ENCODE measurements at regions of chr17 and their contacts with region 1.

Region 1: GRCh38 chr17:74748529-74749365 is at the start of gene NHERF1:
- DNase-seq: peak; percentile 96
- H3K4me3 Mint-ChIP-seq: peak within 1 kb of the TSS; percentile 84
- H3K27ac Mint-ChIP-seq: peak within 1 kb of the TSS; percentile 85
- H3K4me1 Mint-ChIP-seq: peaks cover 52% of the 10 kb centered on the region
- H3K27me3 Mint-ChIP-seq: no peaks in the 10 kb centered on the region
- total RNA-seq, gene NHERF1: 136 TPM

Region 2: DNA sequence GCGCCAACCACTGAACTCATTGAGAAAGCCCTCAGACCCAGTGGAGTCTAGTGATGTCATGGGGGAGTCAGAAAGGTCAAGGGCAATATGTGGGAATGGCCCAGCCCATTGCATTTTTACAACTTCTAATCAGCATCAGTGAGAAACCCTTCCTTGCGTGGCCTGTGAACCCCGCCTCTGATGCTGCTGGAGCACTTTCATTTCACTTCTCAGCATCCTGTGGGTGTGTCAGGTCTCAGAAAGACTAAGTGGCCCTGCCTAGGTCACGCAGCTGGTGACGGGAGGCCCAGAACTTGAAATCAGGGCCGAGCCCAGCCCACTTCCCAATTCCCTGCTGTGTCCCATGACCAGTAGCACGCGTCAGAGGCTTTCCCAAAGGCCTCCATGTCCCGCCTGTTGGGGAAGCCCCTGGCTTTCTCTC is 468.6 kb before region 1 on chr17:
- CTCF ChIA-PET with region 1: no interaction called
- POLR2A ChIA-PET with region 1: no interaction called
- intact Hi-C with region 1: loop called (anchors 5 kb)
- DNase-seq: peak; percentile 86
- H3K4me3 Mint-ChIP-seq: peak overlapping the region; percentile 12
- H3K27ac Mint-ChIP-seq: peak overlapping the region; percentile 90
- H3K4me1 Mint-ChIP-seq: peaks cover 69% of the 10 kb centered on the region
- H3K27me3 Mint-ChIP-seq: no peaks in the 10 kb centered on the region

Region 3: DNA sequence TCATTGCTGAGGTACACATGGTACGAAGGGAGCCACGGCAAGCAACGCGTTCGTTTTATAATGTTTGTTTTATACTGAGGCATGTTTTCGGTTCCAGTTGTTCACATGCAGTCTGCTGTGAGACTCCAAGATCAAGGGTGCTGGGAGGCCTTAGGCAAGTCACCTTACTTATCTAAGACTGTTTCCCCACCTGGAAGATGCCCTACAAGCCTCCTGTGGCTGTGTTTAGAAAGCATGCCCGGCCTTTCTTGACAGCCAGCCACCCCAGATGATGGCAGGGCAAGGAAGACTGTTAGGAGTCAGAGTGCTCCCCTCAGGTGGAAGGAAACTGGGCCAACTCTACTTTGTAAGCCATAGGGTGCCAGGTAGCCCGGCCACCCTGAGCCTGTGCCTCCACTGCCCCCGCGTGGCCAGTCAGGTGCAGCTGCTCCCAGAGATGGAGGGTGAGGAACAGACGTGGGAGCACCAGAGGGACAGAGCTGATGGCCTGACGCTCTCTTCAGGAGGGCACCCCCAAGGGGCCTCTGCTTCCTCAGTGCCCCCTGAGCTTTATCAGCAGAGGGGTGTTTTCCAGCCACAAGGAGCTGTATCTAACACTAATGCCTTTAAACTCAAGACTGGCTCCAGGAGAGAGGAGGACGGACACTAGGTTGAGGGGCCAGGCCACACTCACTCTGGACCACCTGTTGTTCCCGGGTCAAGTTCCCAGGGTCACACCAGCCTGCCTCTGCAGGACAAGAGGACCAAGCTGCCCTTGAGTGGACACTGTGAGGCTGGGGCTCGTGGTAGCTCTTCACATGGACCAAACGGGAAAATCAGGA is 22.0 kb after region 1 on chr17:
- CTCF ChIA-PET with region 1: interaction called, 176 read pairs
- POLR2A ChIA-PET with region 1: interaction called, 24 read pairs
- intact Hi-C with region 1: loop called (anchors 1 kb)
- DNase-seq: peak; percentile 83
- H3K4me3 Mint-ChIP-seq: no peak overlapping the region
- H3K27ac Mint-ChIP-seq: peak overlapping the region; percentile 71
- H3K4me1 Mint-ChIP-seq: peaks cover 40% of the 10 kb centered on the region
- H3K27me3 Mint-ChIP-seq: no peaks in the 10 kb centered on the region

Region 4: GRCh38 chr17:74785096-74785980 is 36.6 kb after region 1 on chr17:
- CTCF ChIA-PET with region 1: interaction called, 52 read pairs
- POLR2A ChIA-PET with region 1: interaction called, 7 read pairs
- intact Hi-C with region 1: loop called (anchors 1 kb)
- DNase-seq: peak; percentile 56
- H3K4me3 Mint-ChIP-seq: no peak overlapping the region
- H3K27ac Mint-ChIP-seq: peak overlapping the region; percentile 35
- H3K4me1 Mint-ChIP-seq: peaks cover 60% of the 10 kb centered on the region
- H3K27me3 Mint-ChIP-seq: no peaks in the 10 kb centered on the region

Region 5: DNA sequence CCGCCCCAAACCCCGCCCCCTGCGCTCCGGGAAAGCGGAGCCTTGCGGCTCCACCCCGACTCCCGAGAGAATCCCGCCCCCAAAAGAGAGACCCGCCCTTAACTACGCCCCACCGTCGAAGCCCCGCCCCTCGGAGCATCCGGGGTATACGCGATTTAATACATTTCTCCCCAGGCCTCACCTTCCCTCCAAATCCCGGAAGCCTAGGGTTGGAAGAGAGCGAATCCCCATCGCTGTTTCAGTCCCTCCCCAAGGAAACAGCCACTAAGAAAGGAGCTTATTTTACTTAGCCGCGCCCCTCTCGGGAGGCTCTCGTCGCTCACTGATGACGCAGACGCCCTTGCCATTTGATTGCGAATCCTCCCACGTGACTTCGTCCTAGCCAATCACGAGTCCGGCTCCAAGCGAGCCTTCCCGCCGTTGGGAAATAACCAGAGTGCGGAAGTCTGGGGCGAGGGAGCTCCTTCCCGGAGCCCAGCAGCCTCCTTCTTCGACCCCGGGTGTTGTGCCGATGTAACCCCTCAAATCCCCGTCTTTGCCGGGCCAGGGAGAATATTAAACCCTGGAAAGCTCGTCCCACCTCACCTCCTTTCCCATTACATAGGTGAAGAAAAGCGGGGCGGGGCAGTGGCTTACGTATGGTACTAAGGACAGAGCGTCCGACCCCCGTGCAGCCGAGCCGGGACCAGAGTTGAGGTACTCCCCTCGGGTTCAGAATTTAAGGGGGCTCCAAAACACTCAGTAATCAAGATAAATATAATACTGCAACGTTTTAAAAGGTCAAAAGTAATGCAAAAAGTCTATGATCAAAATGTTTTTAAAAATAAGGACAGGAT is 124.5 kb after region 1 on chr17:
- CTCF ChIA-PET with region 1: interaction called, 12 read pairs
- POLR2A ChIA-PET with region 1: interaction called, 9 read pairs
- intact Hi-C with region 1: no loop called
- DNase-seq: peak; percentile 100
- H3K4me3 Mint-ChIP-seq: peak overlapping the region; percentile 80
- H3K27ac Mint-ChIP-seq: peak overlapping the region; percentile 93
- H3K4me1 Mint-ChIP-seq: peaks cover 25% of the 10 kb centered on the region
- H3K27me3 Mint-ChIP-seq: no peaks in the 10 kb centered on the region